ENCODE measurements at regions of chr11 and their contacts with region 1.

Region 1: GRCh38 chr11:60821827-60822599 is 19.9 kb upstream of the CCDC86 start:
- DNase-seq: no peak
- ATAC-seq: no peak
- H3K4me3 ChIP-seq: no peak overlapping the region
- H3K27ac ChIP-seq: no peak overlapping the region
- H3K4me1 ChIP-seq: no peaks in the 10 kb centered on the region
- H3K27me3 ChIP-seq: no peaks in the 10 kb centered on the region
- CTCF ChIP-seq: no peak
- POLR2A ChIP-seq: no peak

Region 2: DNA sequence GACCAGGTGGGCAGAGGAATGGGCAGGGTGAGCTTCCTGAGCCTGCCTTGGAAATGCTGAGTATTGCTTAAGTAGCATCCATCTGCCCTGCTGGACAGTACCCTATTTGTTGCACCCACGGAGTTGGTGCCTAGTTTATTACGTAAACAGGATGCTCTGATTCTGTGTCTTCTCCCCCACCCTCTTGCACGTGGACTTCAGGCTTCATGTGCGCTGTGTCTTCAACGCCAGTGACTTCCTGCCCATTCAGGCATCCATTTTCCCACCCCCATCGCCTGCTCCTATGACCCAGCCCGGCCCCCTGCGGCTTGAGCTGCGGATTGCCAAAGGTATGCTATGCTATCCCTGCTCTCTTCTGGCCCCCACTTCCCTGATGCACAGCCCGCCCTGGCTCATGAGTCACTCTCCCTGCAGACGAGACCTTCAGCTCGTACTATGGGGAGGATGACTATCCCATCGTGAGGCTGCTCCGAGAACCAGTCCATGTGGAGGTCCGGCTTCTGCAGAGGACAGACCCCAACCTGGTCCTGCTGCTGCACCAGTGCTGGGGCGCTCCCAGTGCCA is 51.0 kb after region 1 on chr11:
- intact Hi-C with region 1: loop called in 1 of 2 experiments (anchors 10 kb)
- DNase-seq: no peak
- ATAC-seq: no peak
- H3K4me3 ChIP-seq: no peak overlapping the region
- H3K27ac ChIP-seq: no peak overlapping the region
- H3K4me1 ChIP-seq: peaks cover 0 to 10% (median 0%) of the 10 kb centered on the region in 4 donors
- H3K27me3 ChIP-seq: no peaks in the 10 kb centered on the region
- CTCF ChIP-seq: no peak
- POLR2A ChIP-seq: no peak

Region 3: GRCh38 chr11:61129639-61130523 is 307.9 kb after region 1 on chr11:
- intact Hi-C with region 1: loop called in 1 of 2 experiments (anchors 10 kb)
- DNase-seq: peak; percentile 89 to 91 (median 89)
- ATAC-seq: peak; percentile 95 to 99 (median 96)
- H3K4me3 ChIP-seq: no peak overlapping the region
- H3K27ac ChIP-seq: peak overlapping the region in 1 of 3 donors; percentile 4
- H3K4me1 ChIP-seq: peaks cover 0 to 6% (median 0%) of the 10 kb centered on the region in 4 donors
- H3K27me3 ChIP-seq: no peaks in the 10 kb centered on the region
- CTCF ChIP-seq: peak; percentile 98 to 100 (median 100)
- POLR2A ChIP-seq: no peak

Region 4: GRCh38 chr11:61187505-61188130 is 365.6 kb after region 1 on chr11:
- intact Hi-C with region 1: loop called in 1 of 2 experiments (anchors 10 kb)
- DNase-seq: peak in 2 of 3 donors; percentile 57 to 66
- ATAC-seq: peak; percentile 82 to 90 (median 86)
- H3K4me3 ChIP-seq: no peak overlapping the region
- H3K27ac ChIP-seq: no peak overlapping the region
- H3K4me1 ChIP-seq: no peaks in the 10 kb centered on the region
- H3K27me3 ChIP-seq: no peaks in the 10 kb centered on the region
- CTCF ChIP-seq: peak; percentile 86 to 93 (median 93)
- POLR2A ChIP-seq: no peak